Astrocyte of the cerebellum (primary cell): ENCODE measurements at regions of chr13 and their contacts with region 1.

Region 1: DNA sequence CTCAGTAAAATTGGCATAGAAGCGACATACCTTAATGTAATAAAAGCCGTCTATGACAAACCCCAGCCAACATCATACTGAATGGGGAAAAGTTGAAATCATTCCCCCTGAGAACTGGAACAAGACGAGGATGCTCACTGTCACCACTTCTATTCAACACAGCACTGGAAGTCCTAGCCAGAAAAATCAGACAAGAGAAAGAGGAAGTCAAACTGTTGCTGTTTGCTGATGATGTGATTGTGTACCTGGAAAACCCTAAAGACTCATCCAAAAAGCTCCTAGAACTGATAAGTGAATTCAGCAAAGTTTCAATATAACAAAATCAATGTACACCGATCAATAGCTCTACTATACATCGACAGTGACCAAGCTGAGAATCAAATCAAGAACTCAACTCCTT is 63.3 kb downstream of the TNFSF13B start:
- DNase-seq: no peak
- H3K4me3 ChIP-seq: no peak overlapping the region
- CTCF ChIP-seq: no peak

Region 2: DNA sequence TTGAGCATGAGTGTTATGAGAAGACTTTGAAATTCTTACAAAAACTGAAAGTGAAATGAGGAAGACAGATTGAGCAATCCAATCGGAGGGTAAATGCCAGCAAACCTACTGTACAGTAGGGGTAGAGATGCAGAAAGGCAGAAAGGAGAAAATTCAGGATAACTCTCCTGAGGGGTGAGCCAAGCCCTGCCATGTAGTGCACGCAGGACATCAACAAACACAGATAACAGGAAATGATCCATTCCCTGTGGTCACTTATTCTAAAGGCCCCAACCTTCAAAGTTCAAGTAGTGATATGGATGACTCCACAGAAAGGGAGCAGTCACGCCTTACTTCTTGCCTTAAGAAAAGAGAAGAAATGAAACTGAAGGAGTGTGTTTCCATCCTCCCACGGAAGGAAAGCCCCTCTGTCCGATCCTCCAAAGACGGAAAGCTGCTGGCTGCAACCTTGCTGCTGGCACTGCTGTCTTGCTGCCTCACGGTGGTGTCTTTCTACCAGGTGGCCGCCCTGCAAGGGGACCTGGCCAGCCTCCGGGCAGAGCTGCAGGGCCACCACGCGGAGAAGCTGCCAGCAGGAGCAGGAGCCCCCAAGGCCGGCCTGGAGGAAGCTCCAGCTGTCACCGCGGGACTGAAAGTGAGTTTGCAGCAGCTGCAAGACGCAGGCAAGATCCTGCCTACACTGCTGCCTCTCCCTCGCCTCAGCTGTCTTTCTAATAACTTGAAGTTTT is 63.0 kb before region 1 on chr13 and contains the start of gene TNFSF13B:
- in situ Hi-C with region 1: loop called (anchors 10 kb)
- DNase-seq: no peak
- H3K4me3 ChIP-seq: no peak within 1 kb of the TSS
- CTCF ChIP-seq: no peak